ENCODE measurements at regions of chr9 and their contacts with region 1.

Region 1: DNA sequence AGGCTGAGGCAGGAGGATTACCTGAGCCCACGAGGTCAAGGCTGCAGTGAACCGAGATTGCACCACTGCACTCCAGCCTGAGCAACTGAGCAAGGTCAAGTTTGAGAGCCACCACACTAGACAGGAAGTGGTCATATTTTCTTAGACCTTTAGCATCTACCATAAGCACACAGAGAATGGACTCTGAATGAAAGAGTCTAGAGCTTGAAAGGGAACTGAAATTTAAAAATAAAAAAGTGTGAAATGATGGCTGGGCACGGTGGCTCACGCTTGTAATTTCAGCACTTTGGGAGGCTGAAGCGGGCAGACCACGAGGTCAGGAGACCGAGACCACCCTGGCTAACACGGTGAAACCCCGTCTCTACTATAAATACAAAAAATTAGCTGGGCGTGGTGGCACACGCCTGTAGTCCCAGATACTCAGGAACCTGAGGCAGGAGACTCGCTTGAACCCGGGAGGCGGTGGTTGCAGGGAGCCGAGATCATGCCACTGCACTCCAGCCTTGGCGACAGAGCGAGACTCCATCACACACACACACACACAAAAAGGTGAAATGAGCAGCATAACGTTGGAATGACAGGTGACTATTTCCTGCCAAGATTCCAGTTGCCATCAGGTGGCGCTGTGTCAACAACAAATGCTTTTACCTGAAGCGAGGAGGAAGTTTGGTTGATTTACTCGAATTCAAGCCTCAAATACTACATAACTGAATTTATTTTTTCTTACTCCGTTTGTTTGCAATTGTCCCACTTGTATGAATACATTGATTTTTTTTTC is 21.3 kb upstream of the AK3 start:
- DNase-seq: peak; percentile 89
- H3K4me3 ChIP-seq: peak overlapping the region in 3 of 4 donors; percentile 8 to 36 (median 19)
- H3K27ac ChIP-seq: peak overlapping the region; percentile 57 to 76 (median 66)
- H3K4me1 ChIP-seq: peaks cover 0 to 14% (median 4%) of the 10 kb centered on the region in 4 donors
- H3K27me3 ChIP-seq: no peaks in the 10 kb centered on the region
- CTCF ChIP-seq: peak; percentile 75 to 92 (median 86)
- EP300 ChIP-seq: no peak
- POLR2A ChIP-seq: no peak

Region 2: GRCh38 chr9:5437254-5438216 is 675.2 kb after region 1 on chr9 and contains the start of gene PLGRKT:
- in situ Hi-C with region 1: loop called in 3 of 4 experiments (anchors 25 kb)
- intact Hi-C with region 1: no loop called
- DNase-seq: peak; percentile 96
- H3K4me3 ChIP-seq: peak within 1 kb of the TSS; percentile 55 to 61 (median 57)
- H3K27ac ChIP-seq: peak within 1 kb of the TSS; percentile 91 to 97 (median 95)
- H3K4me1 ChIP-seq: peaks cover 6 to 21% (median 13%) of the 10 kb centered on the region in 4 donors
- H3K27me3 ChIP-seq: no peaks in the 10 kb centered on the region
- CTCF ChIP-seq: peak in 4 of 5 experiments; percentile 11 to 38 (median 17)
- EP300 ChIP-seq: no peak
- POLR2A ChIP-seq: peak; percentile 97
- total RNA-seq, gene PLGRKT: 1.6 to 58.3 (median 16.5) TPM

Region 3: DNA sequence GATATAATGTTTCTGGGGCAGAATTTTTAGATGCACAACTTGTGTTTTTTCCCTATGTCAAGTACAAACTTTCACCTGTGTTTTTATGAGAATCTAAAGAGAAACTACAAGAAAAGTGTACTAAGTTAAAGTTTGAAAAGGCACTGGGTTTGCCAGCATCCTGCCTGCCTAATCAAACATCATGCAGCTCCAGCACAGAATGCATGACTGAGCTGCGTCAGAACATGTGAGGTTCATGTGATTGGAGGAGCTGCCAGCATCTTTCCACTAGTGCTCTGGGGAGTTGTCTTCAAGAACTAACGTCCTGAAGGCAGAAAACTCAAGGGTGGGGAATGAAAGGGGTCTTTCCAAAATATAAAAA is 820.5 kb after region 1 on chr9:
- in situ Hi-C with region 1: loop called in 3 of 4 experiments (anchors 25 kb)
- intact Hi-C with region 1: no loop called
- DNase-seq: no peak
- H3K4me3 ChIP-seq: no peak overlapping the region
- H3K27ac ChIP-seq: no peak overlapping the region
- H3K4me1 ChIP-seq: no peaks in the 10 kb centered on the region
- H3K27me3 ChIP-seq: no peaks in the 10 kb centered on the region
- CTCF ChIP-seq: no peak
- EP300 ChIP-seq: no peak
- POLR2A ChIP-seq: no peak